ENCODE measurements at regions of chr3 and their contacts with region 1.

Region 1: DNA sequence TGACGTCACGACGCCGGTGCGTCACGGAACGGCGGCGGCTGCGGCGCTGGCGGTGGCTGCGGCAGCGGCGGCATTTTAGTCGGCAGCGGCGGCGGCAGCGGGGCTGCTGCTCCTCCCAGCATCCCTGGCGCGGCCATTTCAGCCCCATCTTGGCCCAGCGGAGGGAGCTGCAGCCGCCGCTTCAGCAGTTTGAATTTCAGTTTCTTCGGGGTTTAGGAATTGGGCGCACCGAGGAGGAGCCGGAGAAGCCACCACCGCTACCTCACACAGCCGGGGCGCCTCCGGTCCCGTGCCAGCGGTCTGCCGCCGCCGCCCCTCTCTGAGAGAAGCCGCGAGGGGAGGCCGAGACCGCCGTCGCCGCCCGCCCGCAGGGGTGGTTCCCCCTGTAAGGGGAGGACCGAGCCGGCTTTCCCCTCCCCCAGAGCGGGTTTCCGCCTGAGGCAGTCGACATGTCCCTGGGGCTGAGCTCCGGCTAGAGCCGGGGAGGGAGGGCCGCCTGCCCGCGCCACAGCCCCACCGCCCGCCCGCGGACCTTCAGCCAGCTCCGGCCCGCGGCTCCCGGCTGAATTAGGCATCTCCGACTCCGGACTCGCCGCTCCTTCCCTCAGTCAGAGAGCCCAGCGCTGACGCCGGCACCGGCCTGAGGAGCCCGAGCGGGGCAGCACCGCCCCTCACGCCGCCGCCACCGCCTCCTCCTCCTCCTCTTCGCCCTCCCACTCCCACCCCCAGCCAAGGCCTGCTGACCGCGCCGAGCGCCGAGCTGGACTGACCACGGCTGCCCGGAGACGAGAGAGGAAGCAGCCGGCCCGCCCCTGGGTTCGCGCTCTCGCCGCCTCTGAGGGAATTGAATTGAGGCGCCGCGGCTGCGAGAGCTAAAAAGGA is at the start of gene TSC22D2:
- DNase-seq: peak; percentile 96 to 99
- ATAC-seq: peak; percentile 94
- H3K4me3 ChIP-seq: peak within 1 kb of the TSS; percentile 78 to 84
- H3K27ac ChIP-seq: peak within 1 kb of the TSS; percentile 96 to 100
- H3K4me1 ChIP-seq: no peaks in the 10 kb centered on the region
- H3K27me3 ChIP-seq: no peaks in the 10 kb centered on the region
- total RNA-seq, gene TSC22D2: 43.9 to 64.7 TPM

Region 2: GRCh38 chr3:149969940-149970715 is 438.3 kb before region 1 on chr3:
- intact Hi-C with region 1: loop called in 1 of 2 experiments (anchors 5 kb)
- DNase-seq: peak; percentile 85 to 95
- ATAC-seq: peak; percentile 87
- H3K4me3 ChIP-seq: peak overlapping the region; percentile 66 to 98
- H3K27ac ChIP-seq: peak overlapping the region; percentile 80 to 98
- H3K4me1 ChIP-seq: peaks cover 0 to 5% of the 10 kb centered on the region in 2 donors
- H3K27me3 ChIP-seq: no peaks in the 10 kb centered on the region

Region 3: GRCh38 chr3:150238998-150239619 is 169.4 kb before region 1 on chr3:
- intact Hi-C with region 1: loop called in 1 of 2 experiments (anchors 5 kb)
- DNase-seq: no peak
- ATAC-seq: no peak
- H3K4me3 ChIP-seq: no peak overlapping the region
- H3K27ac ChIP-seq: peak overlapping the region in 1 of 2 donors; percentile 34
- H3K4me1 ChIP-seq: peaks cover 0 to 15% of the 10 kb centered on the region in 2 donors
- H3K27me3 ChIP-seq: no peaks in the 10 kb centered on the region

Region 4: GRCh38 chr3:150348500-150348899 is 60.0 kb before region 1 on chr3:
- intact Hi-C with region 1: loop called in 1 of 2 experiments (anchors 2 kb)
- DNase-seq: no peak
- ATAC-seq: peak; percentile 84
- H3K4me3 ChIP-seq: no peak overlapping the region
- H3K27ac ChIP-seq: peak overlapping the region; percentile 8 to 79
- H3K4me1 ChIP-seq: peaks cover 3 to 12% of the 10 kb centered on the region in 2 donors
- H3K27me3 ChIP-seq: no peaks in the 10 kb centered on the region

Region 5: GRCh38 chr3:150449169-150449721 is 40.8 kb after region 1 on chr3:
- intact Hi-C with region 1: loop called in 1 of 2 experiments (anchors 5 kb)
- DNase-seq: no peak
- ATAC-seq: no peak
- H3K4me3 ChIP-seq: no peak overlapping the region
- H3K27ac ChIP-seq: no peak overlapping the region
- H3K4me1 ChIP-seq: peaks cover 1 to 5% of the 10 kb centered on the region in 2 donors
- H3K27me3 ChIP-seq: no peaks in the 10 kb centered on the region

Region 6: GRCh38 chr3:150546226-150547044 is 138.0 kb after region 1 on chr3 and contains the starts of genes EIF2A and SERP1:
- intact Hi-C with region 1: loop called in 1 of 2 experiments (anchors 2 kb)
- DNase-seq: peak; percentile 99
- ATAC-seq: peak; percentile 99
- H3K4me3 ChIP-seq: peak within 1 kb of the TSS; percentile 90 to 95
- H3K27ac ChIP-seq: peak within 1 kb of the TSS; percentile 61 to 89
- H3K4me1 ChIP-seq: peaks cover 0 to 6% of the 10 kb centered on the region in 2 donors
- H3K27me3 ChIP-seq: no peaks in the 10 kb centered on the region
- total RNA-seq, gene EIF2A: 72.8 to 82.7 TPM
- total RNA-seq, gene SERP1: 74.4 to 78.8 TPM

Region 7: GRCh38 chr3:150635526-150635925 is 227.1 kb after region 1 on chr3:
- intact Hi-C with region 1: no loop called
- DNase-seq: no peak
- ATAC-seq: no peak
- H3K4me3 ChIP-seq: no peak overlapping the region
- H3K27ac ChIP-seq: no peak overlapping the region
- H3K4me1 ChIP-seq: no peaks in the 10 kb centered on the region
- H3K27me3 ChIP-seq: no peaks in the 10 kb centered on the region

Region 8: DNA sequence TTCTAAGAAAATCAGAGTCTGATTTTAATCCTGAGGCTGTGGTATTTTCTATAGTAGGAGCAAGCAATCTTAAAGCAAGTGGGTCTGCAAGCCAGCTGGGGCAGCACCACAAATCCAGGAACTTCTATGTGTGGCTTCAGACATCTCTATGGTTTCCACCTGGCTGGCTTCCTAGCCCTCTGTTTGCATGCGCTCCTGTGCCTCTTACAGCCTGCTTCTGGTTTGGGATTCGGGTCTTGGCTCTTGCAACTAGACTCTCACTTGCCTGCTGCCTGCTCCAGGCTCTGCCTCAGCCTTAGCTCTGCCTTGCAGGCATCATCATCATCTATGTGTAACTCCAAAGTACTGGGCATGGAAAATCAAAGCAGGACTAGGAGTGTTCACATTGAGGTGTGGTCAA is 453.4 kb after region 1 on chr3:
- intact Hi-C with region 1: no loop called
- DNase-seq: no peak
- ATAC-seq: no peak
- H3K4me3 ChIP-seq: no peak overlapping the region
- H3K27ac ChIP-seq: no peak overlapping the region
- H3K4me1 ChIP-seq: no peaks in the 10 kb centered on the region
- H3K27me3 ChIP-seq: no peaks in the 10 kb centered on the region

Measured in aorta (tissue), 5 donors.